Activated T-helper 2 cell treated with anti-CD3 and anti-CD28 coated beads, Interferon-gamma antibody, Interleukin-2, Interleukin-4, amounts not matched to agents 10 μg/mL and 5 μg/mL and 100 μg/mL, durations not matched to agents 14 hours and 24 hours and 36 hours (primary cell): ENCODE measurements at regions of chr12 and their contacts with region 1.

Region 1: DNA sequence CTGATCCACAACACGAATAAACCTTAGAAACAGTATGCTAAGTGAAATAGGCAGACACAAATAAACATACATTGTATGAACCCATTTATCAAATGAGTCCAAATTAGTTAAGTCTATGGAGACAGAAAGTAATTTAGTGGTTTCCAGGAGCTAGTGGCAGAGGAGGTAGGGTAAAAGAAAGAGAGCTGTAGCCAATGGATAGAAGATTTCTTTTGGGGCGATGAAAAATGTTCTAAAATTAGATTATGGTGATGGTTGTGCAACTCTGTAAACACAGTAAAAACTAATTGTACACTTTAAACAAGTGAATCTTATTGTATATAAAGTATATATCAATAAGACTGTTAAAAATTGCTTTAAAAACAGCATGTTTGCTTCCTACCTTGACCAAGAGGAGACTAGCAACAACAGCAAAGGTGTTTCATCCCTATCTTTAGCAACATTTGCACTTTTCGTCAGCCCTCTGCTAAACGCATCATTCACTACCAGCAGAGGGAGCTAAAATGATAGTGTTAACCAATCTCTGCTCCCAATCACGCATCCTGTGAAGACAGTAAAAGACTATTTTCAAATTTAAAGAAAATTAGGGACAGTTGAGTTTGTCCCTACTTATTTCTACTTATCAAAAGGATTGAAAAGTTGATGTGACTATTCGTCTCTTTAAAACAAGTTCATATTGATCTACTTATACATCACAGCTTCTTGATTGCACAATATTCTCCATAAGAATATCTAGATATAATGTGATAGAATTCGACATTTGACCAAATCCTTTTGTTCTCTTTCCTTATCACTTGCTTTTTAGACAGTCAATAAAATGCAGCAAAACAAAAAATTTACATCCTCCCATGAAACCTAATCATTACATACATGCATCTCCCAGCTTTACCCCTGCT is 24.0 kb upstream of the LGR5 start:
- DNase-seq: no peak
- H3K4me3 Mint-ChIP-seq: no peak overlapping the region
- H3K27ac Mint-ChIP-seq: no peak overlapping the region
- H3K4me1 Mint-ChIP-seq: no peaks in the 10 kb centered on the region
- H3K27me3 Mint-ChIP-seq: peaks cover 2% of the 10 kb centered on the region

Region 2: DNA sequence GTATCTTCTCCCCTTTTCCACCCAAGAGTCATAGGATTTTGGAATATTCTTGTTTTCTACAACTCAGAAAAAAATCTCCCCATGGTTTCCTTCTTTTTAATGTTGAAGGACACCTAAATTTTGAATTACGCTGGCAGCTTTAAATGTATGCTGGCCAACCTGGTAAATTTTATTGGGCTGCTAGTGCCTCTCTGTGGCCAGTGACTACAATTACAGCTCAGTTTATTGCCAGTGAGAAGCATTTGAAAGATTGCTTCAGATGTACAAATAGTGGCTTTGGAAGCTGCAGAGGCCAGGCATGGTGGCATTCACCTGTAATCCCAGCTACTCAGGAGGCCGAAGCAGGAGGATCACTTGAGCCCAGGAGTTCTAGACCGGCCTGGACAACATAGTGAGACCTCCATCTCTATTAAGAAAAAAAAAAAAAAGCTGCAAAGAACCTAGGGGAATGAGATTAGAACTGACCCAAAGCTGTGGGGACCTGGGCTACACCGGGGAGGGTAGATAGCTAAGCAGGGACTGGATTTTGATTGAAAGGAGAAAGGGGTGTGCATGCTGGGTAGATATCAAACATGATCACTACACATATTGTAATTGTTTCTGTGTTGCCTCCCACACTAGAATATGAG is 331.5 kb after region 1 on chr12:
- intact Hi-C with region 1: loop called (anchors 1 kb)
- DNase-seq: peak; percentile 26
- H3K4me3 Mint-ChIP-seq: no peak overlapping the region
- H3K27ac Mint-ChIP-seq: no peak overlapping the region
- H3K4me1 Mint-ChIP-seq: peaks cover 2% of the 10 kb centered on the region
- H3K27me3 Mint-ChIP-seq: peaks cover 39% of the 10 kb centered on the region